ENCODE measurements at regions of chr21 and their contacts with region 1.

Region 1: GRCh38 chr21:46323227-46324128 is at the start of gene C21orf58:
- H3K4me3 Mint-ChIP-seq: peak within 1 kb of the TSS; percentile 98
- H3K27ac Mint-ChIP-seq: peak within 1 kb of the TSS; percentile 98
- H3K4me1 Mint-ChIP-seq: peaks cover 45% of the 10 kb centered on the region
- H3K27me3 Mint-ChIP-seq: no peaks in the 10 kb centered on the region

Region 2: DNA sequence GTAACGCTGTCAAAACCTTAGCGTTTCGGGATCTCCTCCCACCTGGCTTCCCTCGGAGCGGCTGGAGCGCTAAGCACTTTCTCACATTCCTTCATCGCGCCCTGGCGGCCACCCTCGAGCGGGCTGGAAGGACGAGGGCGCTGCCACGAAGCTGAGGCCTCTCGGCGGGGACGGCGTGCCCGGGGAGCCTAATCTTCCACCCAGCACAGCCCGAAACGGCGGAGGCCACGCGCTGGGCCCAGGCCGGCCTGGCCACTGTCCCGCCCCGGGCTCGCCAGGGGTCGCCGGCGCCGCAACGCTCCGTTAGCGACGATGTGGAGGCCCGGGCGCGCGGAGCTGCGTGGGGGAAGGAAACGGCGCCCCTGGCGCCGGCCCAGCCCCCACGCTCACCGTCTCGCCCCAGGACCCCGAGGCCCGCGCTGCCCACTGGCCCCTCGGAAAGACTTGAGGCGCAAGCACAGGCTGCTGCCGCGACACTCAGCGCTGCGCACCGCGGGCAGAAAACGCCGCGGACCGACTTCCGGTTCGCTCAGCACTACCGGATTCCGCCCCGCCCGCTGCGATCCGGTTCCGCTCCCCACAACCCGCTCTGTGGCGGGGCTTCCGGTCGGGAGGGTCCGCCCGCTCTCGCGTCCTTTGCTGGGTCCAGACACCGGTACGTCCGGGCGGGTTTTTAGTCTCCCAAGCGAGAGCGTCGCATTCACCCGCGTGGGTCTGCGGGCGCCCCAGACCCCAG is 37.5 kb before region 1 on chr21 and contains the start of gene YBEY:
- intact Hi-C with region 1: loop called (anchors 1 kb)
- H3K4me3 Mint-ChIP-seq: peak within 1 kb of the TSS; percentile 95
- H3K27ac Mint-ChIP-seq: peak within 1 kb of the TSS; percentile 98
- H3K4me1 Mint-ChIP-seq: peaks cover 70% of the 10 kb centered on the region
- H3K27me3 Mint-ChIP-seq: no peaks in the 10 kb centered on the region

Region 3: GRCh38 chr21:46458315-46459023 is 135.0 kb after region 1 on chr21 and contains the start of gene DIP2A:
- intact Hi-C with region 1: loop called (anchors 2 kb)
- H3K4me3 Mint-ChIP-seq: peak within 1 kb of the TSS; percentile 90
- H3K27ac Mint-ChIP-seq: peak within 1 kb of the TSS; percentile 98
- H3K4me1 Mint-ChIP-seq: peaks cover 47% of the 10 kb centered on the region
- H3K27me3 Mint-ChIP-seq: no peaks in the 10 kb centered on the region